ENCODE measurements at regions of chr1 and their contacts with region 1.

Region 1: DNA sequence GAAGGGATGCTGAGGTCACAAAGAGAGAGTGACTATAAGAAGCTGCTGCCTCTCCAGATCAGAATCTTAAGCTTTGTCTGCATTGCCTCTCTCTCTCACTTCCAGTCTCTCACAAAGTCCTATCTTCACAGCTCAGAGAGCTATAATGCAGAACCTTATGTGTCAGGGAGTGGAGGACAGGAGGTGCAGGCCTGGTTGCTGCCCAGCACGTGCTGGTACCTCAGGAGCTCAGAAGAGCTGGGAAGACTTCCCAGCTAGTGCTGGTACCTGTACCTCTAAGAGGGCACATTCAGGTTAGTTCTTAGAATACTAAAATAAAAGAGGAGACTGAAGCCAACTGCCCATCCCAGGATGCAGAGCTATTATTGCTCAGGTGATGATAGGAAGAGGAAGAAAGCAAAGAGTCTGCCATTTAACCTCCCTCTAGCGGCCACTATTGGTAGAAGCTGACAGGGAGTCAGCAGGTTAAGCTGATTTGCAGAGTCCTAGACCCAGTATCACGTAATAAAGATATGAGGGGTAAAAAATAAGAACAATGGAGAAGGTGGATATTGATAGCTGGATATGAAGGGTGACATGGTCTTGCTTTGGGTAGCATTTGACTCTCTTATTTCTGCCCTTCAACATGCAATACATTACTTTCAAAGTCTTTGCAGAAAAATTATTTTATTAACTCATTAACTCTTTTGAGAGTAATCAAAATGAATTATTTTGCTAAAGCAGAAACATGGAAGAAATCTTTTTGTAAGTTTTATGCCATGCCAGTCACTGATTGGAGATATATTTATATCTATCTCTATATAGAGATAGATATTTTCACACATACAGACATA is 138.1 kb upstream of the HMCN1 start:
- DNase-seq: peak; percentile 18 to 76 (median 55)
- ATAC-seq: peak; percentile 78
- H3K4me3 ChIP-seq: no peak overlapping the region
- H3K4me3 Mint-ChIP-seq: no peak overlapping the region
- H3K27ac ChIP-seq: no peak overlapping the region
- H3K27ac Mint-ChIP-seq: no peak overlapping the region
- H3K4me1 ChIP-seq: peaks cover 6% of the 10 kb centered on the region
- H3K4me1 Mint-ChIP-seq: peaks cover 16% of the 10 kb centered on the region
- H3K27me3 ChIP-seq: no peaks in the 10 kb centered on the region
- H3K27me3 Mint-ChIP-seq: no peaks in the 10 kb centered on the region
- CTCF ChIP-seq: peak; percentile 58

Region 2: GRCh38 chr1:185420588-185421081 is 175.4 kb before region 1 on chr1:
- CTCF ChIA-PET with region 1: interaction called, 10 read pairs
- POLR2A ChIA-PET with region 1: no interaction called
- intact Hi-C with region 1: no loop called
- DNase-seq: peak in 4 of 9 experiments; percentile 18 to 84 (median 45)
- ATAC-seq: peak; percentile 89
- H3K4me3 ChIP-seq: peak overlapping the region in 1 of 2 experiments; percentile 7
- H3K4me3 Mint-ChIP-seq: peak overlapping the region; percentile 15
- H3K27ac ChIP-seq: peak overlapping the region in 1 of 2 experiments; percentile 55
- H3K27ac Mint-ChIP-seq: no peak overlapping the region
- H3K4me1 ChIP-seq: peaks cover 20% of the 10 kb centered on the region
- H3K4me1 Mint-ChIP-seq: peaks cover 21% of the 10 kb centered on the region
- H3K27me3 ChIP-seq: no peaks in the 10 kb centered on the region
- H3K27me3 Mint-ChIP-seq: no peaks in the 10 kb centered on the region
- CTCF ChIP-seq: no peak

Region 3: GRCh38 chr1:185439727-185440415 is 156.2 kb before region 1 on chr1:
- CTCF ChIA-PET with region 1: interaction called, 4 read pairs
- POLR2A ChIA-PET with region 1: no interaction called
- intact Hi-C with region 1: loop called in 1 of 2 experiments (anchors 10 kb)
- DNase-seq: peak in 3 of 9 experiments; percentile 14 to 81 (median 52)
- ATAC-seq: peak; percentile 80
- H3K4me3 ChIP-seq: no peak overlapping the region
- H3K4me3 Mint-ChIP-seq: no peak overlapping the region
- H3K27ac ChIP-seq: peak overlapping the region; percentile 2 to 85
- H3K27ac Mint-ChIP-seq: no peak overlapping the region
- H3K4me1 ChIP-seq: peaks cover 13% of the 10 kb centered on the region
- H3K4me1 Mint-ChIP-seq: peaks cover 4% of the 10 kb centered on the region
- H3K27me3 ChIP-seq: no peaks in the 10 kb centered on the region
- H3K27me3 Mint-ChIP-seq: no peaks in the 10 kb centered on the region
- CTCF ChIP-seq: no peak

Region 4: DNA sequence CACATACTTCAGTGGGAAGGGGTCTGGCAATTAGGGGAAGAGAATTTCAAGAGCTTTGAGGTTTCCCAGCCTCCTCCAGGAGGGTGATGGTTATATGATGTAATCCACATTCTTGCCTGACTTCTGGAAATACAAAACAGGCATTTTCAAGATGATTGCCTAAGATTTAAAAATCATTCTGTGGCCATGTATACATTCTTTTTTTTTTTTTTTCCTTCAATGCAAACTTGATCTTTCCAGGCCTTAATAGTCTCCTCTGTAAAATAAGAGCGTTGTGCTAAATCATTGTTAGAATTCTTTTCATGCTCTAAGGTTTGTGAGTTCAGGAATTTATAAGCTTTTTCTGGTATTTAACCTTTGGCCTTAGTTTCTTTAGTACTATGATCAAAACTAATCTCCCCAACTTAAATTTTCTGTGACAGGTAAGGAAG is 54.2 kb before region 1 on chr1:
- CTCF ChIA-PET with region 1: interaction called, 8 read pairs
- POLR2A ChIA-PET with region 1: interaction called, 3 read pairs
- intact Hi-C with region 1: loop called in 1 of 2 experiments (anchors 10 kb)
- DNase-seq: no peak
- ATAC-seq: no peak
- H3K4me3 ChIP-seq: no peak overlapping the region
- H3K4me3 Mint-ChIP-seq: no peak overlapping the region
- H3K27ac ChIP-seq: no peak overlapping the region
- H3K27ac Mint-ChIP-seq: no peak overlapping the region
- H3K4me1 ChIP-seq: no peaks in the 10 kb centered on the region
- H3K4me1 Mint-ChIP-seq: peaks cover 5% of the 10 kb centered on the region
- H3K27me3 ChIP-seq: no peaks in the 10 kb centered on the region
- H3K27me3 Mint-ChIP-seq: no peaks in the 10 kb centered on the region
- CTCF ChIP-seq: no peak

Region 5: DNA sequence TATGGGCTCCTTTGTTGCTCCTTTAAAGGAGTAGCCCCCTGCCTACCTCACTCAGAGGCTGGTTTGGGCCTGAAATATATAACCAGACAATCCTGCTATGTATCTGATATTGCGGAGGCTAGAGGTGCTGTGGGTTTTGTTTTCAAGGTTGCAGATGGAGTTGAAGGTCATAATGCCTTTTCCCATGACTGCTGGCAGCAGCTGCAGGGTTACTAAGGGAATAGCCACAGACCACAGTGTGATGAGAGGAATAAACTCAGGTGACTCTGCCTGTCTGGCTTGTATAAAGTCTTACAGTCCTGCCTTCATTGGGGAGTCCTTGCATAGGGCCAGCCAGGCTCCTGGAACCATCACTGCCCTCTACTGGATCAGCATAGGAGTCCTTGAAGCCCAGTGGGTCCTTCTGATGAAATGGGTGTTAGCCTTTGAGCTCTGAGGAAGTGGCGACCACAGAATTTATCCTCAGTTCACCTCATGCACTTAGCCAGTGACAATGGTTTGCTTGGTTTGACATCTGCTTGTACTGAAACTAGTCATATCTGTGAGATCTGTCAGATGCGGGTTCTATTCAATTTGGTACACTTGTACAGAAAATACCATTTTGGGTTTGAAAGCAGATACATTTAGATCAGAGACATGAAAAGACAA is 36.2 kb before region 1 on chr1:
- CTCF ChIA-PET with region 1: interaction called, 8 read pairs
- POLR2A ChIA-PET with region 1: interaction called, 8 read pairs
- intact Hi-C with region 1: loop called (anchors 2 to 5 kb)
- DNase-seq: peak; percentile 8 to 85 (median 51)
- ATAC-seq: peak; percentile 69
- H3K4me3 ChIP-seq: no peak overlapping the region
- H3K4me3 Mint-ChIP-seq: peak overlapping the region; percentile 40
- H3K27ac ChIP-seq: peak overlapping the region in 1 of 2 experiments; percentile 63
- H3K27ac Mint-ChIP-seq: peak overlapping the region; percentile 70
- H3K4me1 ChIP-seq: peaks cover 30% of the 10 kb centered on the region
- H3K4me1 Mint-ChIP-seq: peaks cover 48% of the 10 kb centered on the region
- H3K27me3 ChIP-seq: no peaks in the 10 kb centered on the region
- H3K27me3 Mint-ChIP-seq: no peaks in the 10 kb centered on the region
- CTCF ChIP-seq: no peak

Region 6: GRCh38 chr1:185566995-185567394 is 29.1 kb before region 1 on chr1:
- CTCF ChIA-PET with region 1: interaction called, 12 read pairs
- POLR2A ChIA-PET with region 1: interaction called, 5 read pairs
- intact Hi-C with region 1: loop called in 1 of 2 experiments (anchors 2 kb)
- DNase-seq: peak in 7 of 9 experiments; percentile 27 to 95 (median 60)
- ATAC-seq: peak; percentile 78
- H3K4me3 ChIP-seq: peak overlapping the region in 1 of 2 experiments; percentile 9
- H3K4me3 Mint-ChIP-seq: peak overlapping the region; percentile 74
- H3K27ac ChIP-seq: peak overlapping the region; percentile 79 to 93
- H3K27ac Mint-ChIP-seq: peak overlapping the region; percentile 97
- H3K4me1 ChIP-seq: peaks cover 46% of the 10 kb centered on the region
- H3K4me1 Mint-ChIP-seq: peaks cover 82% of the 10 kb centered on the region
- H3K27me3 ChIP-seq: no peaks in the 10 kb centered on the region
- H3K27me3 Mint-ChIP-seq: no peaks in the 10 kb centered on the region
- CTCF ChIP-seq: no peak

Region 7: DNA sequence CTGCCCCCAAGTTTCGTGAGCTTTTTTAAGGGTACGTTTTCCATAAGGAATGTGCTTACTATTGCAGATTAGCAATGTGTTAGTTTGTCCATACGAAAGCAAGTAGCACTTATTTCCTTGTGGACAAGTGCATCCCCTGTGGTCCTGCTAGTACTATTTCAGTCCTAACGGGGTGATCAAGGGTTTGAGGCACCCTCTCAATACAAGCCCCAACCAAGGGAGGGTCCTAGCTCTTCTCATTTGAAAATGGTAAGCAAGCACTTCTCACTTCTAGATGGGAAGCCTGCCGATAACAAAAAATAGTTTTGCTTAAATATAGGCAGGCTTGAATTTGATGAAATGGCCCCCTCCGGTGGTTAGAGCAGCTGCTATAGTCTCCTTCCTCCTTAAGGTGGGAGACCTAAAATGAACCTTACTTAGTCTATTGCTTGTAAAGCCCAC is 74.2 kb after region 1 on chr1:
- CTCF ChIA-PET with region 1: interaction called, 19 read pairs
- POLR2A ChIA-PET with region 1: no interaction called
- intact Hi-C with region 1: no loop called
- DNase-seq: peak; percentile 12 to 78 (median 63)
- ATAC-seq: peak; percentile 81
- H3K4me3 ChIP-seq: no peak overlapping the region
- H3K4me3 Mint-ChIP-seq: no peak overlapping the region
- H3K27ac ChIP-seq: no peak overlapping the region
- H3K27ac Mint-ChIP-seq: peak overlapping the region; percentile 78
- H3K4me1 ChIP-seq: peaks cover 14% of the 10 kb centered on the region
- H3K4me1 Mint-ChIP-seq: peaks cover 39% of the 10 kb centered on the region
- H3K27me3 ChIP-seq: no peaks in the 10 kb centered on the region
- H3K27me3 Mint-ChIP-seq: no peaks in the 10 kb centered on the region
- CTCF ChIP-seq: peak; percentile 69

Region 8: DNA sequence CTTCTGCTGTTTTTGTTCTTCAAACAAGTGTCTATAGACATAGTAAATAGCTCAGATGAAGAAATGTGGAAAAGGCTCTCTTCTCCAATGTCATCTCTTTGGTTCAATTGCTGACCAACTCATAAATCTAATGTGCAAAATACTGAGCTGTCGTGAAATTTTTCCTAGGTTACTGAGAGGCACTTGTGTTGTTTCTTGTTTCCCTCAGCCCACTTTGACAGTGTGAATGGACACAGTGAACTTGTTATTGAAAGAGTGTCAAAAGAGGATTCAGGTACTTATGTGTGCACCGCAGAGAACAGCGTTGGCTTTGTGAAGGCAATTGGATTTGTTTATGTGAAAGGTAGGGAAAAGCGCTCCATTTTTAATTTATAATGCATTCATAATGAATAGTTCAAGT is 533.7 kb after region 1 on chr1:
- CTCF ChIA-PET with region 1: no interaction called
- POLR2A ChIA-PET with region 1: no interaction called
- intact Hi-C with region 1: no loop called
- DNase-seq: no peak
- ATAC-seq: no peak
- H3K4me3 ChIP-seq: no peak overlapping the region
- H3K4me3 Mint-ChIP-seq: no peak overlapping the region
- H3K27ac ChIP-seq: no peak overlapping the region
- H3K27ac Mint-ChIP-seq: no peak overlapping the region
- H3K4me1 ChIP-seq: no peaks in the 10 kb centered on the region
- H3K4me1 Mint-ChIP-seq: no peaks in the 10 kb centered on the region
- H3K27me3 ChIP-seq: no peaks in the 10 kb centered on the region
- H3K27me3 Mint-ChIP-seq: peaks cover 4% of the 10 kb centered on the region
- CTCF ChIP-seq: no peak

Measured in CD8-positive, alpha-beta T cell (primary cell).